ENCODE measurements at regions of chr3 and their contacts with region 1.

Region 1: GRCh38 chr3:105774444-105775180 is 94.2 kb downstream of the CBLB start:
- DNase-seq: no peak
- H3K4me3 Mint-ChIP-seq: peak overlapping the region; percentile 38
- H3K27ac Mint-ChIP-seq: peak overlapping the region; percentile 81
- H3K4me1 Mint-ChIP-seq: peaks cover 65% of the 10 kb centered on the region
- H3K27me3 Mint-ChIP-seq: no peaks in the 10 kb centered on the region

Region 2: DNA sequence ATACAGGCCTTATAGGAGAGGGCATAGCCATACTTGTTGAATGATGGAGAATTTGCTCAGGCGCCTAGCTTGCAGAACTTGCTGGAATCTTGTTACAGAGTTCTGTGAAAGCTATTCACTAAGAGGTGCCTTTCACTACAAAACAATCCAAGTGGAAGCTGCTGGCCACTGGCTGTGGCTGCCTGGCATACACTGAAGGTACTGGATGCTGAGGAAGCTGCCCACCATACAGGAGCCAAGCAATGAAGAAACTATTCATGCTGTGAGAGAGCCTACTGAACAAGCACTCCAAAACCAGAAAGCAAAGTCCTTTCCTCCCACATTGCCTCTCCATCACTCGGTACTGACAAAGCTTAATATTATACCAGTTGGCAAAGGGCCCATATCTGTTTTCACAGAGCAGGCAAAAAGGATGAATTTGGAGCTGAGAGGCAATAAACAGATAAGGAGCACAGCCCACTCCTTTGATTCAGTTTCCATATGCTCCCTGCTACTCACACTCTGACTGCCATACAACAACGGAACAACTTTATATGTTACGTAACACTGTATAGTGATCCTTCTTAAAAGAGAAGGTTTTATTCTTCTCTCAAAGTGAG is 600.5 kb before region 1 on chr3:
- intact Hi-C with region 1: no loop called
- DNase-seq: no peak
- H3K4me3 Mint-ChIP-seq: no peak overlapping the region
- H3K27ac Mint-ChIP-seq: no peak overlapping the region
- H3K4me1 Mint-ChIP-seq: no peaks in the 10 kb centered on the region
- H3K27me3 Mint-ChIP-seq: no peaks in the 10 kb centered on the region

Region 3: GRCh38 chr3:105729667-105730066 is 44.9 kb before region 1 on chr3:
- intact Hi-C with region 1: loop called (anchors 5 kb)
- DNase-seq: no peak
- H3K4me3 Mint-ChIP-seq: no peak overlapping the region
- H3K27ac Mint-ChIP-seq: no peak overlapping the region
- H3K4me1 Mint-ChIP-seq: peaks cover 9% of the 10 kb centered on the region
- H3K27me3 Mint-ChIP-seq: no peaks in the 10 kb centered on the region

Region 4: DNA sequence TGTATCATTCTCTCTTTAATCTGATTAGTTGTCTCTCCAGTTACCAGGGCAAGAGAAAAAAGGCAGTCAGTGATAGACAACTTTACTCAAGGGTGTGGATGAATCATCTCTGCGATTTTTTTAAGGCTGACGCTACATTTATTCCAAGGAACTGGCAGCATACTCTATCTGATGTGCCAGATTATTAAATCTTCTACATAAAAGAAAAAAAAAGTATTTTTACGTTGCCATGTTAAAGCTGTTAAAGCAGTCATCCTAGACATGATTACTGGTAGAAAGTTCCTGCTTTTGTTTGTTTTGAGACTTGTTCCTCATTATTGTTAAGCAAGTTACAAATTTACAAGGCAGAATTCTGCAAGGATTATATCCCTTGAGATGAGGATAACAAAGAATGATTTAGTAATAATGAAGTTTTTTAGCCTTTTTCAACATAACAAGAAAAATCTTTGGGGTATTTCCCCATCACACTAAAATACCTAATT is 27.5 kb before region 1 on chr3:
- intact Hi-C with region 1: loop called (anchors 1 kb)
- DNase-seq: no peak
- H3K4me3 Mint-ChIP-seq: no peak overlapping the region
- H3K27ac Mint-ChIP-seq: peak overlapping the region; percentile 88
- H3K4me1 Mint-ChIP-seq: peaks cover 64% of the 10 kb centered on the region
- H3K27me3 Mint-ChIP-seq: no peaks in the 10 kb centered on the region

Measured in activated T-helper 2 cell treated with anti-CD3 and anti-CD28 coated beads, Interferon-gamma antibody, Interleukin-2, Interleukin-4, amounts not matched to agents 10 μg/mL and 5 μg/mL and 100 μg/mL, durations not matched to agents 14 hours and 24 hours and 36 hours (primary cell).